HEK293T (cell line): ENCODE measurements at regions of chr10 and their contacts with region 1.

Region 1: GRCh38 chr10:22316285-22317120 is at the start of gene COMMD3:
- DNase-seq: peak; percentile 67

Region 2: DNA sequence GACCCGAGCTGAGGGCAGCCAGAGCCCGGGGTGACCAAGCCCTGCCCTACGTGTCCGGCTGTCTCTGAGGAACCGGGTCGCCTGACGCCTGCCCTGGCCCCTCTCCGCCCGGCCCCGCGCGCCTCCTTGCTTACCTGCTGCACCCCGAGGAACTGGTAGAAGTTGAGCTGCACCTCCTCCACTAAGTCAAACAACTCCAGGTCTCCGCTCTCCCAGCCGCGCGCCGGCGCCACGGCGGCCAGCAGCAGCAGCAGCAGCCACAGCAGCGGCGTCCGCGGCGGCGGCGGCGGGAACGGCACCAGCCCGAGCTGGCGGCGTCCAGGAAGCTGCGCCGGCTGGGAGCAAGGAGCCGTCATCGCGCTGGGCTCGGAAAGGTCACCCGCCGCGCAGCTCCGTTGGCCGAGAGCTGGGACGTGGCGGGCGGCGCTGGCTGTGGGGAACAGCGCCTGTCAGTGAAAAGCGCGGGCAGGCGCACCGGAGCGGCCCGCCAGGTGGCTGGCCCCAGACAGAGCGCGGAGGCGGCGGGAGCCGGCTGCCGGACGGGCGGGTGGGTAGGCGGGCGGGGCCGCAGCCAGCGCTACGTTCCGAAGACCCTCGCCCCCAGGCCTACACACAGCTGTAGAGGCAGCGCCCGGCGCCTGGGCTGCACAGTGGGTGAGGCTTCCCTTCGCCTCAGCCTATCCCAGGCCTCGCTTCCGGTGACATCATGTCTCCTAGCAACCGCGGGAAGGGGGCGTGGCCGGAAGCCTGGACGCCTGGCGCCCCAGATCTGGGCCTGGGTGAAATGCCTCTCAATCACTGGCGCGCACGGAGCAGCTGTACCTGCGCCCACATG is 313.2 kb before region 1 on chr10 and contains the start of gene DNAJC1:
- CTCF ChIA-PET with region 1: no interaction called
- POLR2A ChIA-PET with region 1: interaction called, 11 read pairs
- DNase-seq: peak; percentile 95

Region 3: DNA sequence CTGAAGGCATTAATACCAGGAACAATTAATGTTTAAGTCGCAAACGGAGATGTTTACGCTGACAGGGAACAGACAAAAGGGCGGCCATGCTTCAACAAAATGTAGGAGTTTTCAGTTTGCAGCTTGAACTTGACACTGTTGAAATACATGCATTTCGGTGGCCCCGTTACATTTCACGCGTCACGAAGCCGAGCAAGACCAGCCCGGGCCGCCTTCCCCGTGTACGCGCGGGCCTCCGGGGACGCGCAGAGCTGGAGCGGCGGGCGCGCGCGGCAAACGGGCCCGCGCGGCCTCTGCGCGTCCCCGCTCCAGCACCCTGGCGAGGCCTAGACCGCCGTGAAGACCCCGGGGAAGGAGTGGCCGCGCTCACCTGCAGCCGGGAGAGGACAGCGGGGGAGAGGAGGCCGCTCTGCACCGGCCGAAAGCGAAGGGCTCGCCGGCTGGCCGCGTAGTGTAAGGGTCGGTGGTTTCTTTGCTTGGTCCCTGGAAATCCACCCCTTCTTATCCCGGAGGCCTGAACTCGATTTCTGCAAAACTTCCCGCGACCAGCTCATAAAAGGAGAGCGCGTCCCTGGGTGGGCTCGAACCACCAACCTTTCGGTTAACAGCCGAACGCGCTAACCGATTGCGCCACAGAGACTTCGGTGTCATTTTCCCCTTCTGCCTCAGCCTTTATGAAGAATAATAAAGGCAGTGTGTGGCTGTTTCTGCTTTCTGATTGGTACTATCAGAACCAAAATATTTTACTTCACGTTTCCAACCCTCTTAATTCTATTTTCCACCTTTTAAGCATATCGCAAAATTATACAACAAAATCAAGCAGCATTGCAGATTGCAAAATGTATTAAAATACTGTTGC is 87.3 kb before region 1 on chr10:
- CTCF ChIA-PET with region 1: no interaction called
- POLR2A ChIA-PET with region 1: interaction called, 50 read pairs
- DNase-seq: peak; percentile 83

Region 4: DNA sequence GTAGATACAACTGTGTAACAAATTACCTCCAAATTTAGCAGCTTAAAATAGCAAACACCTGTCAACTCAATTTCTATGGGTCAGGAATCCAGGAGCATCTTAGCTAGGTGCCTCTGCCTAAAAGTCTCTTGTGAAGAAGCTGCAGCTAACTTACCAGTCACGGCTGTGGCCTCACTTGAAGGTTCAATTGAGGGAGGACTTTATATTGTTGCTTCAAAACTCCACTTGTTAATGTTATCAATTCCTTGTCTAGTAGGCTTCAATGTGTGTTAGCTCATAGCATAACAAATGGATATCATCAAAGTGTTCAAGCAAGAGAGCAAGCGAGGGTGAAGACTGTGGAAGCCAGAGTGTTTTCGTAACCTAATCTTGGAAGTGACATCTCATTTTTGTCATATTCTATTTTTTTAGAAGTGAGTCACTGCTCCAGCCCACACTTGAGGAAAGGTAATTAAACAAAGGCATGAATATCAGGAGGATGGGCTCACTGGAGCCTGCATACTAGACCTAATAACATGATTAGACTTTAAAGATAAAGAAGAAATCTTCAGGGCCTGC is 201.7 kb after region 1 on chr10:
- CTCF ChIA-PET with region 1: no interaction called
- POLR2A ChIA-PET with region 1: interaction called, 10 read pairs
- DNase-seq: no peak

Region 5: DNA sequence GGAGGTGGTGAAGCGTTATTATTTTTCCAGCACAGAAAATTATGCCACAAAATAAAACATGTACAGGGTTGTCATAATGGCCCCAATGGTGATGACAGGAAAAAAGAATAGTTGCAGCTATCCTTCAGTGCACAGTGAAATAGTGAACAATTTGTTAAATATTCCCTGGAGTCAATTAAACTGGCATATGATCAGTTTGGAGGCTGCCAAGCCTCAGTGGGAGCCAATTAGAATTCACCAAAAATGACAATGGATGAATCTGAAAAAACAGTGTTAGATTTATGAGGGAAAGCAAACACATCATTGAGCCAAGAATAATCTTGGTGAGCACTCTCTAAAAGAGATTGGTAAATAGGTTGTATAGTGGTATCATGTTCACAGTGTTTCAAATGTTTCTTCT is 1268.7 kb after region 1 on chr10:
- CTCF ChIA-PET with region 1: no interaction called
- POLR2A ChIA-PET with region 1: no interaction called
- DNase-seq: no peak